A673 (cell line): ENCODE measurements at regions of chrX and their contacts with region 1.

Region 1: GRCh38 chrX:34365482-34365881 is 233.4 kb upstream of the FAM47A start:
- DNase-seq: peak; percentile 76
- H3K4me3 ChIP-seq: no peak overlapping the region
- H3K27ac ChIP-seq: no peak overlapping the region
- H3K4me1 ChIP-seq: no peaks in the 10 kb centered on the region
- H3K27me3 ChIP-seq: no peaks in the 10 kb centered on the region
- CTCF ChIP-seq: peak; percentile 73

Region 2: DNA sequence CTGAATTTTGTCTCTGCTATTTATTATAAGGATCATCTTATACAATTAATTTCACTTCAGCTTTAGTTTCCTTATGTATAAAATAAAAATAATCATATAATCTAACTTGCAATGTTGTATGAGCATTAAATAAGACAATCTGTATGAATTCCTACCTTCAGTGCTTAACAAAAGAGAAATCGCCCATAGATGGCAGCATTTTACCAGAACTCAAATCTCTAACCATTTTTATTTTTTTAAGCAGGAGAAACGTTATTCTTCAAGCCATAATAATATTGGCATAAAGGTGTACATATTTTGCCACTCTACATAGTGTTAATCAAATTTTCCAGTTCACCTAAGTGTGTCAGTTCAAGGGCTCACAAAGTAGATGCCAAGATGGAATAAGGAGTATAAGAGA is 212.8 kb after region 1 on chrX:
- CTCF ChIA-PET with region 1: interaction called, 3 read pairs
- POLR2A ChIA-PET with region 1: no interaction called
- intact Hi-C with region 1: loop called (anchors 5 kb)
- DNase-seq: peak; percentile 76
- H3K4me3 ChIP-seq: no peak overlapping the region
- H3K27ac ChIP-seq: no peak overlapping the region
- H3K4me1 ChIP-seq: peaks cover 16% of the 10 kb centered on the region
- H3K27me3 ChIP-seq: no peaks in the 10 kb centered on the region
- CTCF ChIP-seq: peak; percentile 71

Region 3: DNA sequence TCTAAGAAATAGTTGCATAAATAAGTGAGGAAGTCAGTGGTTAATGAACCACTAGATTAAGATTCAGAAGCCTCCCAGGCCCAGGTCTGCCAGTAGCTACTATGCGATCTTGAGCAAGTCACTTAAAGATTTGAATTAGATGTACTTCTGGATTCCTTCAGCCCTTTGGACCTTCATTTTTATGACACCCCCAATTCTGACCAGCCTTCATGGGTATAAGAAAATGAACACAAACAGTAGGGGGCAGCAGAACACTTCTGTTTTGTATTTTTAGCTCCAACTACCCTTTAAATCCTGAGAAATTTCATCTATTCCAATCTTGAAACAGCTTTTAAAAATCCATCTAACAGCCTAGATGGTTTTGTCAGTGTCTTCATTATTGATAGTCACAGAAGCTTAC is 272.6 kb after region 1 on chrX:
- CTCF ChIA-PET with region 1: no interaction called
- POLR2A ChIA-PET with region 1: no interaction called
- intact Hi-C with region 1: loop called (anchors 10 kb)
- DNase-seq: peak; percentile 64
- H3K4me3 ChIP-seq: no peak overlapping the region
- H3K27ac ChIP-seq: no peak overlapping the region
- H3K4me1 ChIP-seq: peaks cover 41% of the 10 kb centered on the region
- H3K27me3 ChIP-seq: no peaks in the 10 kb centered on the region
- CTCF ChIP-seq: peak; percentile 71

Region 4: GRCh38 chrX:35880601-35881000 is 1515.1 kb after region 1 on chrX:
- CTCF ChIA-PET with region 1: no interaction called
- POLR2A ChIA-PET with region 1: no interaction called
- intact Hi-C with region 1: loop called (anchors 5 kb)
- DNase-seq: no peak
- H3K4me3 ChIP-seq: no peak overlapping the region
- H3K27ac ChIP-seq: no peak overlapping the region
- H3K4me1 ChIP-seq: no peaks in the 10 kb centered on the region
- H3K27me3 ChIP-seq: no peaks in the 10 kb centered on the region
- CTCF ChIP-seq: no peak